ENCODE measurements at regions of chr3 and their contacts with region 1.

Region 1: DNA sequence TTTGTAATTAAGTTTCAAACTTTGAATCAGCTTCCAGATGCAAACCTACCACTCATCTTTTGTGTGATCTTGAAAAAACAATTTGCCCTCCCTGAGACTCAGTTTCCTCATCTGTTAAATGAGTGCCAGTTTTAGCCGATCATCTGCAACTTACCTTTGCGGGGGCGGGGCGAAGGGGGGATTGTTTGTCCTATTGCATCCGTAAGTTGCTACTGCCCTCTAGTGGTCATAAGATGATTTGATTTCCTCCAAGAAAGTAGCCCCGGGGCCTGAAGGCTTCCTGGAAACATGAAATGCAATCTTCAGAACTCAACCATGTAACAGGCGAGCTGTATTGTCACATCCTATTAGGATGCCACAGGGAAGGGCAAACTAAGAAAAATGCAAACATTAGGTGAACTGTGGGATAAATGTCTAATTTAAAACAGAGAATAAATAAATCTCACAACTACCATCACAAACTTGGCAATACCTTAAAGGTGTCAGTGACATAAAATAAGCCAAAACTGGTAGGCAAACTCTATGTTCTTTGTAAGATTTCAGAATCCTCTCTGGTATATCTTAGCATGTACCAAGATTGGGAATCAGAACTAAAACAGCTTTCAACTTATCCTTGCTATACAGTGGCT is 63.5 kb upstream of the CLDN18 start:
- DNase-seq: peak; percentile 56 to 75
- H3K4me3 ChIP-seq: no peak overlapping the region
- H3K4me3 Mint-ChIP-seq: no peak overlapping the region
- H3K27ac Mint-ChIP-seq: no peak overlapping the region
- H3K4me1 ChIP-seq: no peaks in the 10 kb centered on the region
- H3K4me1 Mint-ChIP-seq: no peaks in the 10 kb centered on the region
- H3K27me3 ChIP-seq: no peaks in the 10 kb centered on the region
- H3K27me3 Mint-ChIP-seq: peaks cover 4% of the 10 kb centered on the region
- CTCF ChIP-seq: peak; percentile 62 to 78

Region 2: DNA sequence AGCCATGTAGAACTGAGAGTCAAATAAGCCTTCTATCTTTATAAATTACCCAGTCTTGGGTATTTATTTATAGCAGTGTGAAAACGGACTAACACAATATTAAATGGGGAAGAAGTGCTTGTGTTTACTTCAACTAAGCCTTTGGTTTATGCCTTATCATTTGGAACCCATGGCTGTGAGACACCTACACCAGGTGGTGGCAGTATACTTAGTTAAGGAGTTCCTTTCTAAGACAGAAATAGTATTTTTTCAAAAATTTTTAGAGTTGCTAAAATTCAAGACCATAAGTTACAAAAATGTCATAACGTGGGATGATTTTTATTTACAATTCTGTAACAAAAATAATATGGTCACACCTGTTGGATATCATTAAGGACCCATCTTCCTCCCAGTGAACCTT is 536.9 kb before region 1 on chr3:
- CTCF ChIA-PET with region 1: no interaction called
- POLR2A ChIA-PET with region 1: no interaction called
- intact Hi-C with region 1: loop called (anchors 10 kb)
- DNase-seq: no peak
- H3K4me3 ChIP-seq: no peak overlapping the region
- H3K4me3 Mint-ChIP-seq: no peak overlapping the region
- H3K27ac Mint-ChIP-seq: no peak overlapping the region
- H3K4me1 ChIP-seq: no peaks in the 10 kb centered on the region
- H3K4me1 Mint-ChIP-seq: no peaks in the 10 kb centered on the region
- H3K27me3 ChIP-seq: no peaks in the 10 kb centered on the region; the same call in 1 of the 2 replicates
- H3K27me3 Mint-ChIP-seq: peaks cover 7% of the 10 kb centered on the region
- CTCF ChIP-seq: peak in 1 of 2 experiments; percentile 18

Region 3: GRCh38 chr3:137709011-137709601 is 237.4 kb before region 1 on chr3:
- CTCF ChIA-PET with region 1: no interaction called
- POLR2A ChIA-PET with region 1: no interaction called
- intact Hi-C with region 1: loop called (anchors 1 kb)
- DNase-seq: peak in 1 of 2 experiments; percentile 9
- H3K4me3 ChIP-seq: no peak overlapping the region
- H3K4me3 Mint-ChIP-seq: no peak overlapping the region
- H3K27ac Mint-ChIP-seq: no peak overlapping the region
- H3K4me1 ChIP-seq: no peaks in the 10 kb centered on the region
- H3K4me1 Mint-ChIP-seq: no peaks in the 10 kb centered on the region
- H3K27me3 ChIP-seq: no peaks in the 10 kb centered on the region
- H3K27me3 Mint-ChIP-seq: peaks cover 14% of the 10 kb centered on the region
- CTCF ChIP-seq: peak; percentile 42 to 58

Region 4: GRCh38 chr3:137792626-137793271 is 153.7 kb before region 1 on chr3:
- CTCF ChIA-PET with region 1: no interaction called
- POLR2A ChIA-PET with region 1: no interaction called
- intact Hi-C with region 1: loop called (anchors 2 kb)
- DNase-seq: peak; percentile 46 to 49
- H3K4me3 ChIP-seq: no peak overlapping the region
- H3K4me3 Mint-ChIP-seq: no peak overlapping the region
- H3K27ac Mint-ChIP-seq: no peak overlapping the region
- H3K4me1 ChIP-seq: no peaks in the 10 kb centered on the region
- H3K4me1 Mint-ChIP-seq: no peaks in the 10 kb centered on the region
- H3K27me3 ChIP-seq: no peaks in the 10 kb centered on the region
- H3K27me3 Mint-ChIP-seq: no peaks in the 10 kb centered on the region
- CTCF ChIP-seq: peak; percentile 41 to 58

Region 5: GRCh38 chr3:138051946-138052802 is 105.7 kb after region 1 on chr3:
- CTCF ChIA-PET with region 1: no interaction called
- POLR2A ChIA-PET with region 1: no interaction called
- intact Hi-C with region 1: loop called (anchors 1 kb)
- DNase-seq: peak in 1 of 2 experiments; percentile 64
- H3K4me3 ChIP-seq: no peak overlapping the region
- H3K4me3 Mint-ChIP-seq: no peak overlapping the region
- H3K27ac Mint-ChIP-seq: no peak overlapping the region
- H3K4me1 ChIP-seq: no peaks in the 10 kb centered on the region
- H3K4me1 Mint-ChIP-seq: no peaks in the 10 kb centered on the region
- H3K27me3 ChIP-seq: no peaks in the 10 kb centered on the region
- H3K27me3 Mint-ChIP-seq: peaks cover 2% of the 10 kb centered on the region
- CTCF ChIP-seq: peak; percentile 63 to 82

Measured in Caco-2 (cell line).